Prostate gland (tissue), 2 donors: ENCODE measurements at regions of chr6 and their contacts with region 1.

Region 1: DNA sequence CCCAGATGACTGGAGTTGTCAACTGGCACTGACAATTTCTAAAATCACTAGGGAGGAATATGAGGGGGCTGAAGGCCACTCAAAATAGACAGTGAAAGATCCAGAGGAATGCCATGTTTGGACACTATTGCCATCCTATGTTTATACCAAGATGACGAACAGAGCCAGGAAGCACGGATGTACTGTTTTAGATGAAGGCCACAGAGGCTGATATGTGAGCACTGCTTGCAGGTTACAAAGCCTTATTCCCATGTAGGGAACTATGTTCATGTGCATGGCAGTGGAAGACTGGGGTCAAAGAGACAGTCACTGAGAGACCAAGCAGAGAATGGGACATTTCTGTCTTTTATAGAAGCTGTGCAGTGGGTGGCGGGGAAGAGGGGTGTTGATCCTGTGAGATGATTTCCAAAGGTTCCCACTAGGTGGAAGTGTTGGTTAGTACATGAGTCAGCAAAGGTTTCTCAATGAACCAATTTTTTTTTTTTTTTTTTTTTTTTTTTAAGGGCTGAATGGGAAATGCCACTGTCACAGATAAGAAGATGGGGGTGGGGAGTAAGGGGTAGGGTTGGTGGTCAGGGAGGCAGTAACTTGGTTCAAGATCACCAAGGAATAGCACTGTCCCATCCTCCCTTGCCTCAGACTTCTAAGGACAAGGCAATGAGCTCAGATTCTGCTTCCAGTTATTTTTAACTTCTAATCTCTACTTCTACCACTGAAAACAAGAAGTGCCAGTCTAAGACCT is 46.7 kb upstream of the MOCS1 start:
- DNase-seq: peak; percentile 16
- H3K4me3 ChIP-seq: no peak overlapping the region
- H3K27ac ChIP-seq: no peak overlapping the region
- H3K4me1 ChIP-seq: no peaks in the 10 kb centered on the region
- H3K27me3 ChIP-seq: no peaks in the 10 kb centered on the region
- CTCF ChIP-seq: peak in 3 of 4 experiments; percentile 41 to 56 (median 53)
- POLR2A ChIP-seq: no peak

Region 2: GRCh38 chr6:40077315-40077714 is 96.3 kb after region 1 on chr6:
- intact Hi-C with region 1: no loop called
- DNase-seq: no peak
- H3K4me3 ChIP-seq: no peak overlapping the region
- H3K27ac ChIP-seq: no peak overlapping the region
- H3K4me1 ChIP-seq: no peaks in the 10 kb centered on the region
- H3K27me3 ChIP-seq: no peaks in the 10 kb centered on the region
- CTCF ChIP-seq: no peak
- POLR2A ChIP-seq: no peak

Region 3: GRCh38 chr6:40219799-40220198 is 238.8 kb after region 1 on chr6:
- intact Hi-C with region 1: no loop called
- DNase-seq: no peak
- H3K4me3 ChIP-seq: no peak overlapping the region
- H3K27ac ChIP-seq: no peak overlapping the region
- H3K4me1 ChIP-seq: no peaks in the 10 kb centered on the region
- H3K27me3 ChIP-seq: no peaks in the 10 kb centered on the region
- CTCF ChIP-seq: no peak
- POLR2A ChIP-seq: no peak

Region 4: DNA sequence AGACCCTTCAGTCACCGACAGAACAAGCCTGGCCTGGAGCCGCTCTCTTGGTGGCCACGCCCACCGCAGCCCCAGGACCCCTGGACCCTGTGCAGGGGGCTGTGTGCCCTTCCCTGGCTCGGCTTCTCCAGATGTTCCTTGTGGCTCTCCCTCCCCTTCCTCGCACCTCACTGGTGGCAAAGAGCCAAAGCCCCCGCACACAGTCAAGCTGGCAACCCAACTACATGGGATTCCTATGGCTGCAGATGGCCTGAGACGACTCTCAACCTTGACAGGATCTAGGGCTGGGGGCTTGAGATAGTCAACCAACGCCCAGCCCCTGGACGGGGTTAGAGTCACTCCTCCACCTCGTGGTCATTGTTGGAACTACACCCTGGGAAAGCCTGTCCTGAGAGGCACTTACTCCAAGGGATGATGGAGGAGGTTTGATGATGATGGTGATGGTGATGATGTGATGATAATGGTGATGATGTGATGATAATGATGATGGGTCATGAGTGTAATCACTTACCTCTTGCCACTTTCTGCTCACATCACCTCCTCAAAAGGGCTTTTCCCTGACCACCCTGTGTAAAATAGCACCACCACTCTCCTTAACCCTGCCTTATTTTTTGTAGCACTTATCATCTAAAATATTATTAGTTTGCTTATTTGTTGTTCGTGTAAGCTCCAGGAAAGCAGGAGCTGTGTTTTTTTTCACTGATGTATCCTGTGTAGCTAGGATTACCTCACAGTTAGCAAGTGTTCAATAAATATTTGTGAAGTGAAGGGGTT is 327.7 kb after region 1 on chr6:
- intact Hi-C with region 1: loop called (anchors 10 kb)
- DNase-seq: peak; percentile 21
- H3K4me3 ChIP-seq: no peak overlapping the region
- H3K27ac ChIP-seq: no peak overlapping the region
- H3K4me1 ChIP-seq: no peaks in the 10 kb centered on the region
- H3K27me3 ChIP-seq: peaks cover 4% of the 10 kb centered on the region
- CTCF ChIP-seq: peak; percentile 83 to 92 (median 87)
- POLR2A ChIP-seq: no peak

Region 5: GRCh38 chr6:41027799-41028628 is 1047.0 kb after region 1 on chr6:
- intact Hi-C with region 1: loop called (anchors 5 kb)
- DNase-seq: peak; percentile 76
- H3K4me3 ChIP-seq: peak overlapping the region; percentile 33 to 41
- H3K27ac ChIP-seq: peak overlapping the region; percentile 70 to 75
- H3K4me1 ChIP-seq: no peaks in the 10 kb centered on the region
- H3K27me3 ChIP-seq: no peaks in the 10 kb centered on the region
- CTCF ChIP-seq: peak; percentile 91 to 99 (median 96)
- POLR2A ChIP-seq: no peak

Region 6: DNA sequence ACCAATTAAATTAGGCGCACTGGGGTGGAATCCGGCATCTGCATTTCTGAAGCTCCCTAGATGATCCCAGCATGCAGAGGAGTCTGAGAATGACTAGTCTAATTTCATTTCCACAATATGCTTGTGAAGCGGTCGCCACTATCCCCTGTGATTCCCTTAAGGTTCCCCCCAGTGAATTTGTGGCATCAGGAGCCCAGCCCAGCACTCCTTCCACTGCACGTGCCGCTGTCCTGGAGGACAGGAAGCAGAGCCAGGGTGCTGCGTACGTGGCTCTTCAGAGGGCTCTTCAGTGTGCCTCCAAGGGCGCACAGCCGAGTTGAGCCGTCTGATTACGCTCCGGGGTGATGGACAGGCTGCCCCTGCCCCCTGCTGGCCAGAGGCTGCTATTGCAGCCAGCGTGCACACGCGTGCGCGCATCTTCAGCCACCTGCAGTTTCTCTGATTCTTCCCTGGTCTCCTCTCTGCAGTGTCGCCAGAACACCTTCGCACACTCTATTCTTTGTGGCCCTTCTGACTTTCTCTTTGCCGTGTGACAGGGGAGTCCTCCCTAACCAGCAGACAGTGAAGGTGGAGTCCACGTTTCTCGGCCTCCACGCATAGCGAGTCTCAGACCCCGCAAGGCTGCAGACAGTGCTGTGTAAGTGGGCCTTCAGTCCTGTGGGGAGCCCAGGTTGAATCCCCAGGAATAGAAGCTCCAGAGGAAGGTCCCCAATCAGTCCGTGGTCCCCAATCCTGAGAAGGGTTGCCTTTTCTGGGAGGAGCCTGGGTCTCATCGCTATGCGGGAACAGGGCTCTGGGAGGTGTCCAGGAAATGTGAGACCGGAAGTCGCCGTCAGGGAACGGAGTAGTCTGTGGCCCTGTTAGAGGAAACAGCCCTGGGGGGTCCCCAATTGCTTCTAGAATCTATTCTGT is 1337.9 kb after region 1 on chr6:
- intact Hi-C with region 1: loop called (anchors 5 kb)
- DNase-seq: peak; percentile 67
- H3K4me3 ChIP-seq: peak overlapping the region in 1 of 2 donors; percentile 12
- H3K27ac ChIP-seq: no peak overlapping the region
- H3K4me1 ChIP-seq: no peaks in the 10 kb centered on the region
- H3K27me3 ChIP-seq: no peaks in the 10 kb centered on the region
- CTCF ChIP-seq: peak; percentile 95 to 98 (median 97)
- POLR2A ChIP-seq: no peak